Gastrocnemius medialis (tissue), 4 donors: ENCODE measurements at regions of chr10 and their contacts with region 1.

Region 1: DNA sequence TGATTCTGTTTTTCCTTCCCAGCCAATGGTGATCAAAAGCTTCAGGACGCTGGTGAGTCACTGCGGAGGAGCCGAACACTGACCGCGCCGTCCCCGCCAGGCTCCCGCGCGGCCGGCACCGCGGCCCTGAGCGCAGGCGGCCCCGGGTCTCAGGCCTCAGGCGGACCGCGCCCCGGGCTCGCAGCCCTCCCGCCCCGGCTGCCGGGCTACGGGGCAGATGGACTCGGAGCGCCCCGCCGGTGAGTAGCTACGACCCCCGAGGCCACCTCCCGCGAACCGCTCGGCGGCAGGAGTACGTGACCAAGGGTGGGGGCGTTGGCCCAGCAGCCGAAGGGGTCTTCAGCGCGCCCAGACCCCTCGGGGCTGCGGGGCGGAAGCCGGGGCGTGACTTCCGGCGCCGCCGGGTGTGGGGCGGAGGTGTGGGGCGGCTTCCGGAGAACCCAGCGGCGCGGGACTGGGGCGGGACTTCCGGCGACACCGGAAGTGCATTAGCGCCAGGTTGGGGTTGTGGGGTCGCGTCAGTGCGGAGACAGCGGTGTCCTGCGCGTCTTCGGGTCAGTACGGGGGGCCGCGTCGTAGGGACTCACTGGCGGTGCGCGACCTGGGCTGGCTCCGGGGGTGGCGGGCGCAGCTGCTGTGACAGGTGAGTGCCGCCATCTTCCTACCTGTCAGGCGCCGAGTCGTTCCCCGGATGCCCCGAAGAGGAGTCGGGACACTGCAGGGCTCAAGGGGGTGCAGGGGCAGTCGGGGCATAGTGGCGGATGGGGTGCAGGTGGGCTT is at the start of gene WDR37:
- DNase-seq: peak; percentile 76 to 86
- ATAC-seq: peak; percentile 88 to 95
- H3K4me3 ChIP-seq: peak within 1 kb of the TSS; percentile 84 to 99 (median 98)
- H3K27ac ChIP-seq: peak within 1 kb of the TSS; percentile 96 to 100 (median 98)
- H3K4me1 ChIP-seq: peaks cover 61 to 62% of the 10 kb centered on the region in 2 donors
- H3K27me3 ChIP-seq: no peaks in the 10 kb centered on the region
- CTCF ChIP-seq: peak in 1 of 5 experiments; percentile 10
- POLR2A ChIP-seq: peak; percentile 90 to 92
- total RNA-seq, gene WDR37: 18.4 to 26.2 (median 23.2) TPM

Region 2: GRCh38 chr10:931416-932318 is 124.8 kb before region 1 on chr10 and contains the start of gene LARP4B:
- in situ Hi-C with region 1: loop called in 1 of 4 experiments (anchors 10 kb)
- intact Hi-C with region 1: loop called (anchors 1 kb)
- DNase-seq: peak; percentile 93 to 97
- ATAC-seq: peak; percentile 92 to 93
- H3K4me3 ChIP-seq: peak within 1 kb of the TSS; percentile 75 to 95 (median 82)
- H3K27ac ChIP-seq: peak within 1 kb of the TSS; percentile 96 to 100 (median 98)
- H3K4me1 ChIP-seq: peaks cover 37 to 45% of the 10 kb centered on the region in 2 donors
- H3K27me3 ChIP-seq: no peaks in the 10 kb centered on the region
- CTCF ChIP-seq: no peak
- POLR2A ChIP-seq: peak; percentile 88 to 90
- total RNA-seq, gene LARP4B: 29.7 to 45.6 (median 40.0) TPM